Activated T-helper 1 cell treated with anti-CD3 and anti-CD28 coated beads, Interleukin-12 subunit alpha, Interleukin-12 subunit beta, Interleukin-2, Interleukin-4 antibody, amounts not matched to agents 30 ng/mL and 10 ng/mL and 1 ng/mL, durations not matched to agents 14 hours and 24 hours and 36 hours (primary cell): ENCODE measurements at regions of chr6 and their contacts with region 1.

Region 1: GRCh38 chr6:44002593-44003344 is 124.5 kb downstream of the MRPL14 start:
- DNase-seq: peak; percentile 48
- H3K4me3 Mint-ChIP-seq: peak overlapping the region; percentile 63
- H3K27ac Mint-ChIP-seq: no peak overlapping the region
- H3K4me1 Mint-ChIP-seq: peaks cover 6% of the 10 kb centered on the region
- H3K27me3 Mint-ChIP-seq: peaks cover 37% of the 10 kb centered on the region

Region 2: GRCh38 chr6:44049163-44049988 is 46.6 kb after region 1 on chr6:
- intact Hi-C with region 1: loop called (anchors 5 kb)
- DNase-seq: peak; percentile 16
- H3K4me3 Mint-ChIP-seq: peak overlapping the region; percentile 40
- H3K27ac Mint-ChIP-seq: peak overlapping the region; percentile 83
- H3K4me1 Mint-ChIP-seq: peaks cover 13% of the 10 kb centered on the region
- H3K27me3 Mint-ChIP-seq: no peaks in the 10 kb centered on the region